B cell (primary cell): ENCODE measurements at regions of chr17 and their contacts with region 1.

Region 1: GRCh38 chr17:10059369-10060211 is 138.8 kb downstream of the GAS7 start:
- DNase-seq: peak; percentile 64
- ATAC-seq: peak; percentile 39
- H3K4me3 ChIP-seq: no peak overlapping the region
- H3K4me3 Mint-ChIP-seq: peak overlapping the region; percentile 55
- H3K27ac ChIP-seq: peak overlapping the region in 1 of 2 donors; percentile 32
- H3K27ac Mint-ChIP-seq: peak overlapping the region; percentile 42
- H3K4me1 ChIP-seq: peaks cover 31 to 40% of the 10 kb centered on the region in 2 donors
- H3K4me1 Mint-ChIP-seq: peaks cover 55% of the 10 kb centered on the region
- H3K27me3 ChIP-seq: no peaks in the 10 kb centered on the region
- H3K27me3 Mint-ChIP-seq: peaks cover 2% of the 10 kb centered on the region
- CTCF ChIP-seq: no peak

Region 2: DNA sequence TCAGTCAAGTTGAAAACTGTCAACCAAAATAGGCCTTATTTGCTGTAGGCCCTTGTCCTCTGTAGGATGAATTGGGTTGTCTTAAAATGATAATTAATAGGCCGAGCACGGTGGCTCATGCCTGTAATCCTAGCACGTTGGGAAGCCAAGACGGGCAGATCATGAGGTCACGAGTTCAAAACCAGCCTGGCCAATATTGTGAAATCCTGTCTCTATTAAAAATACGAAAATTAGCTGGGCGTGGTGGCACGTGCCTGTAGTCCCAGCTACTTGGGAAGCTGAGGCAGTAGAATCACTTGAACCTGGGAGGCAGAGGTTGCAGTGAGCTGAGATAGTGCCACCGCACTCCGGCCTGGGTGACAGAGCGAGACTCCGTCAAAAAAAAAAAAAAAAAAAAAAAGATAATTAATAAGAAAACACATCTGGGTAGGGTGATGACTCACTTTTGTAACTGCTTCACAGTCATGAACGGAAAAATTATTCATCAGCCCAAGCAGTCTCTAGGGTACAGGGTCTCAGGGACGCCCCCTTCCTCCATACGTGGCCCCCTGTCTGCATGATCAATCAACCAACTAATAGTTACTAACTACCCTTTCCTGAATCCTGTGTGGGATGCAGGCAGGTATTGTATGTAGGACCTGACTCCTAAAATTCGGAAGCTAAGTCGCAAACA is 17.5 kb before region 1 on chr17:
- CTCF ChIA-PET with region 1: no interaction called
- POLR2A ChIA-PET with region 1: no interaction called
- intact Hi-C with region 1: loop called (anchors 1 kb)
- DNase-seq: peak; percentile 28
- ATAC-seq: peak; percentile 72
- H3K4me3 ChIP-seq: no peak overlapping the region
- H3K4me3 Mint-ChIP-seq: peak overlapping the region; percentile 8
- H3K27ac ChIP-seq: no peak overlapping the region
- H3K27ac Mint-ChIP-seq: peak overlapping the region; percentile 35
- H3K4me1 ChIP-seq: peaks cover 19 to 38% of the 10 kb centered on the region in 2 donors
- H3K4me1 Mint-ChIP-seq: peaks cover 45% of the 10 kb centered on the region
- H3K27me3 ChIP-seq: no peaks in the 10 kb centered on the region
- H3K27me3 Mint-ChIP-seq: no peaks in the 10 kb centered on the region
- CTCF ChIP-seq: no peak

Region 3: DNA sequence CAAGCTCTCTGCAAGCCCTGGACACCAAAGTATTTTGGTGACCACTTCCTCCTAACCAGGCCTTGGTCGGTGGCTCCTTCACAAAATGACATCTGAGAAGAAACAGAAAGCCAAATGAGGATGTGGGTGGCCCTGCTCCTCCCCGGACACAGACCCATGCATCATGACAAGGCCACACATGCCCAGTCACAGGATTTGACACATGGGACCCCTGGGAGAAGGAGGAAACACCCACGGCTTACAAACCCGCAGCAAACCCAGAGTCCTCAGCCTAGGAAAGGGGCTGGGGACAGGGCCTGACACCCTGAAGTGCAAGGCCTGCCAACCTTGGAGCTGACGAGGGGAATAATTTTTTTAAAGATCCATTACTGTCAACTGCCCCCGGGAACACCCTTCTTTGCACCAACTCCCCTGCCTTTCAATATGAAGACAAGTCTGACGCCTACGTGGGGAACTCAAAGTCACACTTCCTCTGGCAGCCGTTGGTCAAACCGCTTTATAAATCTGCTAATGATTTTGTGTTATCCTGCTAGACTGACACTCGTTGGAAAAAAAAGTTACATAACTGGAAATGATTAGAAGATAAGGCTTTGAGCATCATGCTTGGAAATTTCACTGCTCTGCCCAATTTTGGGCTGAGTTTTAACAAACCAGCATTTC is 97.5 kb after region 1 on chr17:
- CTCF ChIA-PET with region 1: no interaction called
- POLR2A ChIA-PET with region 1: no interaction called
- intact Hi-C with region 1: loop called (anchors 5 kb)
- DNase-seq: peak; percentile 83
- ATAC-seq: peak; percentile 79
- H3K4me3 ChIP-seq: peak overlapping the region in 1 of 5 experiments; percentile 25
- H3K4me3 Mint-ChIP-seq: peak overlapping the region; percentile 80
- H3K27ac ChIP-seq: peak overlapping the region; percentile 82 to 88
- H3K27ac Mint-ChIP-seq: peak overlapping the region; percentile 98
- H3K4me1 ChIP-seq: peaks cover 25 to 31% of the 10 kb centered on the region in 2 donors
- H3K4me1 Mint-ChIP-seq: peaks cover 30% of the 10 kb centered on the region
- H3K27me3 ChIP-seq: no peaks in the 10 kb centered on the region
- H3K27me3 Mint-ChIP-seq: no peaks in the 10 kb centered on the region
- CTCF ChIP-seq: no peak